ENCODE measurements at regions of chr16 and their contacts with region 1.

Region 1: DNA sequence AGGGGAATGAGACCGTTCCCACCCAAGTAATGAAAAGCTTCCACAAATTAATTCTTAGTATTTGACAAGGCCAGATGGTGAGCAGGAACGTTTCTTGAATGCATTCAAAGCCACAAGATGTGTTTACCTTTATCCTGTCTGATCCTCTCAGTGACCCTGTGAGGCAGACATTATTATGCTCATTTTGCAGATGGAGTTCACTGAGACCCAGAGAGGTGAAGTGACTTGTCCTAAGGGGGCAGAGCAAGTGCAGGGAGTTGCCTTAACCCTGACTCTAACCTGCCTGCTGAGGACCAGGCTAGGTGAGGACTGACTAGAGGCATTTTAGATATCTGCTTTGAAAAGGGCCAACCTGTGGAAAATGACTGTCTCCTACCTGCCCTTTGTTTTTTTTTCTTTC is 156.7 kb downstream of the HAPSTR1 start:
- DNase-seq: no peak
- H3K4me3 ChIP-seq: no peak overlapping the region
- H3K27ac ChIP-seq: no peak overlapping the region
- H3K4me1 ChIP-seq: no peaks in the 10 kb centered on the region
- H3K27me3 ChIP-seq: no peaks in the 10 kb centered on the region
- CTCF ChIP-seq: no peak
- EP300 ChIP-seq: no peak
- RAD21 ChIP-seq: no peak

Region 2: DNA sequence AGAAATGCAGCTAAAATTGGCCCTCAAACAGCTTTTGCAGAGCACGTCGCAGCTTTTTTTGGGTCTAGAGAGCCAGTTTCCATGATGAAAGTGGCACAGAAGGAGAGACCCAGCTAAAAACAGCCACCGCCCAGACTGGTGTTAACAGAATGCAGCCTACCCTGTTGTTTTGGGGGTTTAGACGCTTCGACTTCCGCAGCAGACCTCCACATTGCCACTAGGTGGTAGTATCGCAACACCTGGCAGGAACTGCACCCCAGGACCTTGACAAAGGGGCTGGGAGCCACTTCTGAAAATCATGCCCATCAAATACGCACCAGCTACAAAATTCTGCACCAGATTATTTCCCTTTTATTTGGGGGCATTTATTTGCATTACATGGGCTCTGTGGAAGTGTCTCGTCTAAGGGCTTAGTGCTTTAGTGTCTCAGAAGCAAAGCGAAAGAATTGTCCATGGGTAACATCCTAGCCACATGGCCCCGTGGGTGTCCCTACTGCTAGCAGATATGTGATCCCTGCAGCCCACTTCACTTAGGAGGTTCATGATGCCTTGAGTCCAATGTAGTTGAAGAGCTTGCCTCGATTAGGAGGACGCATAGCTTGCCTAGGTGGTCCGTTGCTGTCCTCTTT is 10.4 kb after region 1 on chr16:
- CTCF ChIA-PET with region 1: interaction called, 14 read pairs
- POLR2A ChIA-PET with region 1: no interaction called
- DNase-seq: peak; percentile 63
- H3K4me3 ChIP-seq: peak overlapping the region in 1 of 2 experiments; percentile 47; a peak in 1 of 4 replicates
- H3K27ac ChIP-seq: no peak overlapping the region
- H3K4me1 ChIP-seq: peaks cover 0 to 13% of the 10 kb centered on the region in 2 experiments; a peak in 1 of 4 replicates
- H3K27me3 ChIP-seq: no peaks in the 10 kb centered on the region
- CTCF ChIP-seq: peak; percentile 44
- EP300 ChIP-seq: no peak
- RAD21 ChIP-seq: peak; percentile 78

Region 3: GRCh38 chr16:9275377-9275776 is 27.2 kb after region 1 on chr16:
- CTCF ChIA-PET with region 1: no interaction called
- POLR2A ChIA-PET with region 1: no interaction called
- DNase-seq: no peak
- H3K4me3 ChIP-seq: no peak overlapping the region
- H3K27ac ChIP-seq: no peak overlapping the region
- H3K4me1 ChIP-seq: no peaks in the 10 kb centered on the region
- H3K27me3 ChIP-seq: no peaks in the 10 kb centered on the region
- CTCF ChIP-seq: no peak
- EP300 ChIP-seq: no peak
- RAD21 ChIP-seq: no peak

Region 4: GRCh38 chr16:9365376-9365728 is 117.2 kb after region 1 on chr16:
- CTCF ChIA-PET with region 1: no interaction called
- POLR2A ChIA-PET with region 1: no interaction called
- DNase-seq: peak; percentile 33
- H3K4me3 ChIP-seq: no peak overlapping the region
- H3K27ac ChIP-seq: no peak overlapping the region
- H3K4me1 ChIP-seq: peaks cover 0 to 2% of the 10 kb centered on the region in 2 experiments; a peak in 1 of 4 replicates
- H3K27me3 ChIP-seq: no peaks in the 10 kb centered on the region
- CTCF ChIP-seq: no peak
- EP300 ChIP-seq: no peak
- RAD21 ChIP-seq: no peak